Naive thymus-derived CD4-positive, alpha-beta T cell (primary cell): ENCODE measurements at regions of chr2 and their contacts with region 1.

Region 1: DNA sequence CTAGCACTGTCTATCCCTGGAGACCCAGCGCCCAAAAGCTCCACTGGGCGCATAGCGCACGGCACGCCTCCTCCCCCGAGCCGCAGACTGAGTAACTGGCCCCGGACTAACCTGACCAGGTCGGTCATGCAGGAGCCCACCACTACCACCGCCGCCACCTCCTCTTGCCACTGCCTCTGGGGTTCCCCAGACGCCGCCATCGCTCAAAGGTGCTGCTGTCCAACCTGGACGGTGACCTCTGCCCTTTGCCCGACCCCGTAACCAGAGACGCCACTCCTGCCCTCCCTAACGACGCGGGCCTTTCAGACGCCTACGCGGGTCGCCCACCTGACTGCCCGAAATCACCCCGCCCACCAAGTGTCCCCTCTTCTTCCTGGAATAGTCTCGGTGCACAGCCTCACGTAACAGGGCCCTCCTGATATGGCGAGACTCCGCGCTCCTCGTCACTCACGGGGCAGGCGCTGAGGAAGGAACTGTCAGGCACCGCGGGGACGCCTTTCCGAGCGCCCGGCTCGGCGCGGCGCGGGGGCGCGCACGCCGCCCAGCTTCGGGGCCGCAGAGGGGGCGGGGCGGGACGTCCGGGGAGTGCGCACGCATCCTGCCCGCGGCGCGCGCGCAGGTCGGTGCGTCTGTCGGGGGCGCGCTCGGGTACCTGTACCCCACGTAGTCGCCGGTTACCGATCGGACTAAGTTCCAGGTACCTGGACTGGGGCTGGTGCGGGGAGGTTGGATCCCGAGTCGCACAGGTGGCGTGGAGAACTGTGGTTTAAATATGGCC is at the starts of genes BABAM2 and RBKS:
- DNase-seq: peak; percentile 90 to 96 (median 94)
- ATAC-seq: peak; percentile 92
- H3K4me3 ChIP-seq: peak within 1 kb of the TSS; percentile 95
- H3K4me3 Mint-ChIP-seq: peak within 1 kb of the TSS; percentile 96 to 100 (median 98)
- H3K27ac ChIP-seq: peak within 1 kb of the TSS; percentile 99
- H3K27ac Mint-ChIP-seq: peak within 1 kb of the TSS; percentile 95 to 100 (median 100)
- H3K4me1 ChIP-seq: peaks cover 27 to 30% of the 10 kb centered on the region in 2 donors
- H3K4me1 Mint-ChIP-seq: peaks cover 28 to 60% (median 55%) of the 10 kb centered on the region in 7 donors
- H3K27me3 ChIP-seq: no peaks in the 10 kb centered on the region
- H3K27me3 Mint-ChIP-seq: peaks cover 0 to 3% (median 0%) of the 10 kb centered on the region in 5 donors
- total RNA-seq, gene BABAM2: 34.2 to 55.8 (median 40.3) TPM
- total RNA-seq, gene RBKS: 1.5 to 10.8 (median 2.0) TPM

Region 2: GRCh38 chr2:26764078-26764887 is 1126.1 kb before region 1 on chr2 and contains the start of gene SLC35F6:
- CTCF ChIA-PET with region 1: no interaction called
- POLR2A ChIA-PET with region 1: no interaction called
- intact Hi-C with region 1: loop called in 1 of 2 experiments (anchors 5 kb)
- DNase-seq: peak; percentile 70 to 90 (median 86)
- ATAC-seq: peak; percentile 95
- H3K4me3 ChIP-seq: peak within 1 kb of the TSS; percentile 92
- H3K4me3 Mint-ChIP-seq: peak within 1 kb of the TSS; percentile 85 to 97 (median 94)
- H3K27ac ChIP-seq: peak within 1 kb of the TSS; percentile 82
- H3K27ac Mint-ChIP-seq: peak within 1 kb of the TSS; percentile 62 to 97 (median 91)
- H3K4me1 ChIP-seq: peaks cover 23% of the 10 kb centered on the region in 2 donors
- H3K4me1 Mint-ChIP-seq: peaks cover 28 to 54% (median 39%) of the 10 kb centered on the region in 7 donors
- H3K27me3 ChIP-seq: no peaks in the 10 kb centered on the region
- H3K27me3 Mint-ChIP-seq: peaks cover 0 to 6% (median 0%) of the 10 kb centered on the region in 5 donors
- total RNA-seq, gene SLC35F6: 17.3 to 22.5 (median 19.9) TPM

Region 3: DNA sequence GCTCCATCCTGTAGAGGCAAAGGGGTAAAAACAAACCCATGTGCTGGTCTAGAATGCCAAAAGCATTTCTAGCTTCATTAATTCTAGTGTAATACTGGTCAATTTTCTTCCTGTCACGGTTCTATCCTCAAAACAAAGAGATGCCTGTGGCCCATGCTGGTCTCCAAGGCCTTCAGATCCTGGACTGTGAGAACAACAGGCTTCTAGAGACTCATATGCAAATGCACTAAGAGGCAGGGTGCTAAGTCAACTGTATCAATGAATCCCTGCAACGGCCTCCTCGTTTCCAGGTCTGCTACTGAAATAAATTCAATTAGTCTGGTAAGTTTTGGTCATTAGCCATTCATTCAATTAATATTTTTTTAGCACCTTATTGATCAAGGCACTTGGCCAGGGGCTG is 404.8 kb before region 1 on chr2:
- CTCF ChIA-PET with region 1: no interaction called
- POLR2A ChIA-PET with region 1: no interaction called
- intact Hi-C with region 1: no loop called
- DNase-seq: no peak
- ATAC-seq: no peak
- H3K4me3 ChIP-seq: no peak overlapping the region
- H3K4me3 Mint-ChIP-seq: no peak overlapping the region
- H3K27ac ChIP-seq: no peak overlapping the region
- H3K27ac Mint-ChIP-seq: peak overlapping the region in 3 of 9 donors; percentile 21 to 47 (median 34)
- H3K4me1 ChIP-seq: peaks cover 11 to 16% of the 10 kb centered on the region in 2 donors
- H3K4me1 Mint-ChIP-seq: peaks cover 8 to 20% (median 17%) of the 10 kb centered on the region in 7 donors
- H3K27me3 ChIP-seq: no peaks in the 10 kb centered on the region
- H3K27me3 Mint-ChIP-seq: no peaks in the 10 kb centered on the region

Region 4: DNA sequence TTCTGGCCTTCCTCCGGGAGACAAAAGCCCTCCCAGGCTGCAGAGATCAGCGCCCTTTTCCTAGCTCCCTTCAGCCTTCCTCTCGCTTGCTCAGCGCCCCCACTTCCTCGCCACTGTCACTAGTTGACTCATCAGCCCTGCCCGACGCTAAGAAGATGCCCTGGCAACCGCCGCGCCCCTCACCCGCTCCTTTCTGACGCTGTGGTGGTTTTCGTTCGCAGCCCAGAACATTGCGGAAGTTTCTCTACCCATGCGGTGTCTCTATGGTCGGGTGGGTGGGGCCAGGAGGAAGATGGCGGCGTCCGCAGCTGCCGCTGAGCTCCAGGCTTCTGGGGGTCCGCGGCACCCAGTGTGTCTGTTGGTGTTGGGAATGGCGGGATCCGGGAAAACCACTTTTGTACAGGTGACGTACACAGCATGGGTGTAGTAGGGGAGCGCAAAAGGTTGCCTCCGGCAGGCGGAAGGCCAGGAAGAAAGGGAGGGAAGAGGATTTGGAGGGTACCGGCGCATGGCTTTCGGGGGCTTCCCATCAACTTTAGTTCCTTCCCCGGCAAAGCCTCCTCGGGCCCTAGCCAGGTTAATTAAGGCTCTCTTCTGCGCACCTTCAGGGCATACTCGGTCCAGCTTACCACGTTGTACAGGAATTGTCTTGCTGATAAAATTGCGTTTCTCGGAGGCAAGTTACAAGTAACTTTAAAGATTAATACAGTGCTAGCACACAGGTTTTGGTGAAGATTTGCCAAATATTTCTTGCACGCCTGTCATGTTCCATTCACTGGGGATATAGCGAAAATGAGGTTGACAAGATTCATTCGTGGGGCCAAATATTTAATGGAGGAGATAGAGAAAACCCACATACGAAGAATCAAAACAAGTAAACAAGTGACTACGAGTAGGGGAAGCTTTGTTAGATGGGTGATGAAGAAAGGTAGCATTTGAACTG is 261.3 kb before region 1 on chr2 and contains the starts of genes CCDC121 and GPN1:
- CTCF ChIA-PET with region 1: no interaction called
- POLR2A ChIA-PET with region 1: interaction called, 3 read pairs
- intact Hi-C with region 1: loop called in 1 of 2 experiments (anchors 2 kb)
- DNase-seq: peak; percentile 79 to 96 (median 93)
- ATAC-seq: peak; percentile 99
- H3K4me3 ChIP-seq: peak within 1 kb of the TSS; percentile 92
- H3K4me3 Mint-ChIP-seq: no peak within 1 kb of the TSS
- H3K27ac ChIP-seq: peak within 1 kb of the TSS; percentile 92
- H3K27ac Mint-ChIP-seq: peak within 1 kb of the TSS in 5 of 9 donors; percentile 16 to 72 (median 59)
- H3K4me1 ChIP-seq: peaks cover 11 to 13% of the 10 kb centered on the region in 2 donors
- H3K4me1 Mint-ChIP-seq: peaks cover 1 to 33% (median 22%) of the 10 kb centered on the region in 7 donors
- H3K27me3 ChIP-seq: no peaks in the 10 kb centered on the region
- H3K27me3 Mint-ChIP-seq: no peaks in the 10 kb centered on the region
- total RNA-seq, gene CCDC121: 0.61 to 2.7 (median 1.9) TPM
- total RNA-seq, gene GPN1: 27.8 to 45.5 (median 28.9) TPM

Region 5: DNA sequence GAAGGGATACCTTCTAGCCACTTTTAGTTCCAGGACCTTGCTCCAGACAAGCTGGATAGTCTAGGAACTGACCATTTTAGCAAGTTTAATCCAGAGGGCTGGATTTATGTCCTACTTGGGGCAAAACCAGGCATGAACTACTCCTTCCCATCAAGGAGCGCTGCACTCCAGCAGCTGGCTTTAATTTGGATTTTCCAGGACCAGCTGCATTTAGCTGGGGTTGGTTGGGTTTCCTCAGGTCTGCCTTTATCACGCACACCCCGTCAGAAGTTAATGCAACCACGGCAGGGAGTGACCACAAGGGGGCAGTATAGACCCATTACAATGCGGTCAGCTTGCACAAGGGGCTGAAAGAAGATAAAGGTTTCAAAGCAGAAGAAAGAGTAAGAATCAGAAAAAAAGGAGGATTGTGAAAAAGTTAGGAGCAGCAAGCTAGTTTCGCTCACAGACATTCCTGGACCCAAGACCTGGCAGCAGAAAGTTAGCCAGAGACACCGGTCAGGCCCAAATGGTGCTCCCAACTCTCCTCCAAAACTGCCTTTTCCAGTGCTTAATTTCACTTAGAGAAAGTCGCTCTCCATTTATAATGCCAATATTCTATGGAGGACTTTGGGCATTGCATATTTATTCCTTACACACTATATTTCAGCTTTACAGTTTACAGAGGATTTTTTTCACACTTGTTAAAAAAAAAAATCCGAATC is 186.5 kb before region 1 on chr2:
- CTCF ChIA-PET with region 1: no interaction called
- POLR2A ChIA-PET with region 1: no interaction called
- intact Hi-C with region 1: loop called in 1 of 2 experiments (anchors 10 kb)
- DNase-seq: peak; percentile 59 to 83 (median 77)
- ATAC-seq: peak; percentile 94
- H3K4me3 ChIP-seq: no peak overlapping the region
- H3K4me3 Mint-ChIP-seq: no peak overlapping the region
- H3K27ac ChIP-seq: no peak overlapping the region
- H3K27ac Mint-ChIP-seq: peak overlapping the region in 1 of 9 donors; percentile 36
- H3K4me1 ChIP-seq: no peaks in the 10 kb centered on the region
- H3K4me1 Mint-ChIP-seq: peaks cover 0 to 16% (median 4%) of the 10 kb centered on the region in 7 donors
- H3K27me3 ChIP-seq: no peaks in the 10 kb centered on the region
- H3K27me3 Mint-ChIP-seq: no peaks in the 10 kb centered on the region

Region 6: GRCh38 chr2:27960237-27960912 is 70.0 kb after region 1 on chr2:
- CTCF ChIA-PET with region 1: interaction called, 4 read pairs
- POLR2A ChIA-PET with region 1: no interaction called
- intact Hi-C with region 1: loop called in 1 of 2 experiments (anchors 1 kb)
- DNase-seq: peak in 5 of 9 donors; percentile 3 to 31 (median 22)
- ATAC-seq: peak; percentile 54
- H3K4me3 ChIP-seq: no peak overlapping the region
- H3K4me3 Mint-ChIP-seq: peak overlapping the region in 7 of 10 donors; percentile 5 to 71 (median 46)
- H3K27ac ChIP-seq: no peak overlapping the region
- H3K27ac Mint-ChIP-seq: peak overlapping the region in 5 of 9 donors; percentile 7 to 83 (median 52)
- H3K4me1 ChIP-seq: peaks cover 22 to 28% of the 10 kb centered on the region in 2 donors
- H3K4me1 Mint-ChIP-seq: peaks cover 25 to 77% (median 63%) of the 10 kb centered on the region in 7 donors
- H3K27me3 ChIP-seq: no peaks in the 10 kb centered on the region
- H3K27me3 Mint-ChIP-seq: no peaks in the 10 kb centered on the region

Region 7: GRCh38 chr2:28894470-28895177 is 1004.3 kb after region 1 on chr2 and contains the start of gene WDR43:
- CTCF ChIA-PET with region 1: no interaction called
- POLR2A ChIA-PET with region 1: no interaction called
- intact Hi-C with region 1: loop called in 1 of 2 experiments (anchors 10 kb)
- DNase-seq: peak; percentile 97 to 100 (median 99)
- ATAC-seq: peak; percentile 100
- H3K4me3 ChIP-seq: peak within 1 kb of the TSS; percentile 88
- H3K4me3 Mint-ChIP-seq: peak within 1 kb of the TSS; percentile 91 to 99 (median 98)
- H3K27ac ChIP-seq: peak within 1 kb of the TSS; percentile 78
- H3K27ac Mint-ChIP-seq: peak within 1 kb of the TSS; percentile 91 to 99 (median 94)
- H3K4me1 ChIP-seq: peaks cover 28% of the 10 kb centered on the region in 2 donors
- H3K4me1 Mint-ChIP-seq: peaks cover 31 to 49% (median 43%) of the 10 kb centered on the region in 7 donors
- H3K27me3 ChIP-seq: no peaks in the 10 kb centered on the region
- H3K27me3 Mint-ChIP-seq: peaks cover 0 to 2% (median 0%) of the 10 kb centered on the region in 5 donors
- total RNA-seq, gene WDR43: 49.6 to 75.0 (median 63.9) TPM